ENCODE measurements at regions of chr10 and their contacts with region 1.

Region 1: DNA sequence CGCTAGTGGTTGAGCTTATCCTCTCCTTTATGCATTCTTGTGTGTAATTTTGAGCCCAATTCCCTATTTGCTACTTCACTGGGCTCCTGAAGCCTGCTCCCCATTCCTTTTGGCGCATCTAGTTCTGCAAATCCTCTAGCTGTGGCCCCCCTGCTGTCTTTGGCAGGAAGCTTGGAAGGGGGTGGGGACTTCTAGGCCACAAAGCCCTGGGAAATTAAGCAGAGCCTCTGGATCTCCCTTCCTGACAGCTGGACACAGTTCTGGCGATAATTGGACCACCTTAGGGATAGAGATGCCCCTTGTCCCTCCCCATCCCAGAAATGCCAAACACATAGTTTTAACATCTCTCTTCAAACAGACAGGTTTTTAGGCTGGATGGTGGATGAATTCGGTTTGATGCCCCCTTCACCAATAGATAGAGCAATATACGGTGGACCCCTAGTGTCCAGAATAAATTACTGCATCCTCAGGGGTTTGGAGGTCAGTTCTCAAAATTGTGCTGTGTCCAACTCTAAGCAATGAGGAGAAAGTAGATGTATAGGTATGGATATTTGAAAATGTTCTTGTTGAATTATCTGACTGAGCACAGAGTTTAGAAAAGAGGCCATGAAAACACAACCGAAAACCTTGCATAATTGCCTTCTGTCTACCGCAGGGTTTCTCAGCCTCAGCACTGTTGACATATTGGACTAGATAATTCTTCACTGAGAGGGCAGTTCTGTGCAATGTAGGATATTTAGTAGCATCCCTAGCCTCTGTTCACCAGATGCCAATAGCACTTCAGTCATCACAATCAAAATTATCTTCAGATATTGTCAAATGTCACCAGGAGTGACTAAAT is 75.5 kb downstream of the PAPSS2 start:
- DNase-seq: peak; percentile 3
- H3K4me3 ChIP-seq: no peak overlapping the region
- H3K27ac ChIP-seq: no peak overlapping the region
- H3K27me3 ChIP-seq: no peaks in the 10 kb centered on the region
- CTCF ChIP-seq: peak; percentile 81

Region 2: GRCh38 chr10:87531908-87532622 is 203.1 kb before region 1 on chr10:
- CTCF ChIA-PET with region 1: interaction called, 16 read pairs
- POLR2A ChIA-PET with region 1: no interaction called
- DNase-seq: no peak
- H3K4me3 ChIP-seq: no peak overlapping the region
- H3K27ac ChIP-seq: no peak overlapping the region
- H3K27me3 ChIP-seq: no peaks in the 10 kb centered on the region
- CTCF ChIP-seq: no peak

Region 3: DNA sequence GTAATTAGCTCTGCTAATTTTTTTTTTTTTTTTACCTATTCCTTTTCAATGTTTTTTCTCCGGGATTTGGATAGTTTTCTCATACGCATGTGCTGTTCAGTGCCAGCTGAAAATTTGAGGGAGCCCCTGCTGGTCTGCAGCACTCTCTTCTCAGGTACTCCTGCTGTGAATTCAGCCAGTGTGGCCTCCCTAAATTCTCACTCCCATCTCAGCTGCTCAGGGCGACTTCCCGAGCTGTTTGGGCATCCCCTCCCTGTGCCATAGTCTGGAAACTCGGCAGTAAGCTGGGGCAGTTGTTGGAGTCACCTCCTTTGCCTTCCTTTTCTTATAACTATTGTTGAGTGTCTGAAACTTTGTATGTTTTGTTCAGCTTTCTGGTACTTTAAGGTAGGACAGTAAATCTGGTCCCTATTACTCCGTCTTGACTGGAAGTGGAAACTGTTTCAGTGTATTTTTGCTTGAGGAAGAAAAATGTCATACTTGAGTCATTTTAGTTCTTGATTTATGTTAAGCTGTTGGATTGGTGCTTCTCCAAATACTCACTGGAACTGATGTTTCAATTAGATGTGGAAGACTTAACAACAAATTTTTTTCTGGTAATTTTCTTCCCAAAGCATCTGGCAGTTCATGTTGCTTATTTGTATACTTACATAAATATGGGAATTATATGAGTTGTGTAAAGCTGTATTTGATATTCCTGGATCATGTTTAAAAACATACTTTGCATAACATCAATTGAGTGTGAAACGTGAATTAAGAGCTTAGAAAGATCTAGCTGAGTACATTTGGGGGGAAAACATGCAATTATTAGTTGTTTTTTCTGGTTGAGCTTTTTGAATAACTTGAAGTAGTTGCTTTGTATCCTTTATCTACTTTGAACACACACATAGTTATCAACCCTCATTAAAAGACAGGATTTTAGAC is 196.9 kb before region 1 on chr10:
- CTCF ChIA-PET with region 1: interaction called, 16 read pairs
- POLR2A ChIA-PET with region 1: no interaction called
- DNase-seq: no peak
- H3K4me3 ChIP-seq: no peak overlapping the region
- H3K27ac ChIP-seq: no peak overlapping the region
- H3K27me3 ChIP-seq: no peaks in the 10 kb centered on the region
- CTCF ChIP-seq: no peak

Region 4: DNA sequence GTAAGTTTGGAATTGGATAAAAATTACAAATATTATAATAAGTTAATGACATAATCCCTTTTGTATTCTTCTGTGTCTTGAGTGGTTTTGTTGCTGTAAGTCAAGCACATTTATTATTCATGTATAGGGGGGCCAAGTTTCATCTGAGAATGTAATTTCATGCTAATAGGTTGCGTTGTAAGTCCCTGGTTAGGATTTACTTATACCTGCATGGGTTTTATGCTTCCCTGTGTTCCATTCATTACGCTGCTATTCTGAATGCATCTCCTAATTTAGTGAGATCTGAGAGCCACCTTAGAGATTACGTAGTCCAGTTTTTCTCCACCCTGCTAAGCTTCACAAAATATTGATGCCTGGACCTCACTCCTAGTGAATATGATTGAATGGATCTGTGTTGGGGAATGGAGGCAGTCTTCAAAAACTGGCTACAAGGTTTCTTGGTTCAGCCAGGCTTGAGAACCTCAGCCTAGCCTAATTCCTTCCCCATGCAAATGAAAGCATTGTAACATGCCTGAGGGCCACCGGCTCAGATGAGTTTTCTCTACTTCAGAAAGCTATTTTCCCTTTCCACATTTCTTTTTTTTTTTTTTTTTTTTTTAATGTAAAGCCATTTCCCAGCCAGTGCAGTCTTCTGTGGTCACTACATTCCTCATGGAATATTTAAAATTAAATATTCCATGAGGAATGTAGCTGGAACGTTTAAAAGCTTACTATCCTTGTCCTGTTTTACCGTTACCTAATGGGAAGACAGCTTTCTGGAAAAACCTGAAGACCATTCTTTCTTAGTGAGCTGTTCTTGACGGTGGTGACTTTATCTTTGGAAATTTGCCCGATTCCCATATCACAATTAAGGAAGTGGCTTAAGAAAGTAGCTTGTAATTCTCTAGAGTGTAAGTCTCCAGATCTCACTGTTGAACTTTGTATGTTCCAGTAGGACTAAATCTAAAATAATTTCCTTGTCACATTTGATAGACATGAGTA is 59.5 kb before region 1 on chr10:
- CTCF ChIA-PET with region 1: no interaction called
- POLR2A ChIA-PET with region 1: no interaction called
- DNase-seq: peak; percentile 59
- H3K4me3 ChIP-seq: no peak overlapping the region
- H3K27ac ChIP-seq: peak overlapping the region; percentile 54
- H3K27me3 ChIP-seq: no peaks in the 10 kb centered on the region
- CTCF ChIP-seq: no peak

Region 5: GRCh38 chr10:87721781-87722180 is 13.4 kb before region 1 on chr10:
- CTCF ChIA-PET with region 1: interaction called, 11 read pairs
- POLR2A ChIA-PET with region 1: no interaction called
- DNase-seq: no peak
- H3K4me3 ChIP-seq: no peak overlapping the region
- H3K27ac ChIP-seq: no peak overlapping the region
- H3K27me3 ChIP-seq: no peaks in the 10 kb centered on the region
- CTCF ChIP-seq: no peak

Measured in AG04450 (cell line).